Activated CD4-positive, alpha-beta memory T cell treated with anti-CD3 and anti-CD28 coated beads for 36 hours (primary cell): ENCODE measurements at regions of chr20 and their contacts with region 1.

Region 1: DNA sequence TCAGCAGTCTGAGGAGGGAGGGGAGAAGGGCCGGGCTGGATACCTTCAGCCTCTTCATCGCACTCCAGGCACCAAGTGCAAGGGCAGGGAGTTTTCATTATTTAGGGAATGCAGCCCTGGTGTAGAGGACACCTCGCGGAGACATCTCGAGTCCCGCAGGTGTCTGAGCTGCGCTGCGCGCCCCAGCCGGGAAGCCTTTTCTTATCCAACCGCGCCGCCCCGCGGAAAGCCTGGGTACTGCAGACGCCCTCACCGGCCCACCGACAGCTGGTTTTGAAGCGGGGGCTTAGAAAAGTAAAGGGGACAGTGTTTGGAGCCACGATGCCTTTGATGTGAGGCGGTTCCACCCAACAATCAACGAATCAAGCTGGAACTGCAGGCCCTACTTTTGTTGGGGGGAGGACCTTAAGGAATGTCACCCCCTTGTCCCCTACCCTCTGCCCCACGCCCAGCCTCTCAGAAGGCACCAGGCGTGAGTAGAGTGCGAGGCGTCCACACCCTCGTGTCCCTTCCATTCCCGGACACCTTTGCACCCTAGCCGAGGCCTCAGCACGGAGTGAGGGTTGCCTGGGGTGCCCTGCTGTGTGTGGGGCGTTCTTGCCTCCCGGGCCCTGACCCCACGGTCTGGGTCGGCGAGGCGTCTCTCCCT is 8.6 kb downstream of the NKX2-2 start:
- DNase-seq: peak; percentile 85
- H3K4me3 Mint-ChIP-seq: peak overlapping the region; percentile 57
- H3K27ac Mint-ChIP-seq: no peak overlapping the region
- H3K4me1 Mint-ChIP-seq: peaks cover 32% of the 10 kb centered on the region
- H3K27me3 Mint-ChIP-seq: peaks cover 49% of the 10 kb centered on the region

Region 2: GRCh38 chr20:20860078-20860806 is 645.0 kb before region 1 on chr20:
- CTCF ChIA-PET with region 1: interaction called, 40 read pairs
- POLR2A ChIA-PET with region 1: no interaction called
- intact Hi-C with region 1: loop called (anchors 2 kb)
- DNase-seq: peak; percentile 91
- H3K4me3 Mint-ChIP-seq: no peak overlapping the region
- H3K27ac Mint-ChIP-seq: no peak overlapping the region
- H3K4me1 Mint-ChIP-seq: no peaks in the 10 kb centered on the region
- H3K27me3 Mint-ChIP-seq: peaks cover 14% of the 10 kb centered on the region

Region 3: GRCh38 chr20:21099751-21100577 is 405.3 kb before region 1 on chr20:
- CTCF ChIA-PET with region 1: interaction called, 17 read pairs
- POLR2A ChIA-PET with region 1: no interaction called
- intact Hi-C with region 1: no loop called
- DNase-seq: peak; percentile 68
- H3K4me3 Mint-ChIP-seq: peak overlapping the region; percentile 74
- H3K27ac Mint-ChIP-seq: peak overlapping the region; percentile 63
- H3K4me1 Mint-ChIP-seq: peaks cover 30% of the 10 kb centered on the region
- H3K27me3 Mint-ChIP-seq: peaks cover 68% of the 10 kb centered on the region

Region 4: GRCh38 chr20:21395666-21396598 is 109.4 kb before region 1 on chr20:
- CTCF ChIA-PET with region 1: interaction called, 17 read pairs
- POLR2A ChIA-PET with region 1: no interaction called
- intact Hi-C with region 1: loop called (anchors 2 kb)
- DNase-seq: peak; percentile 64
- H3K4me3 Mint-ChIP-seq: peak overlapping the region; percentile 33
- H3K27ac Mint-ChIP-seq: no peak overlapping the region
- H3K4me1 Mint-ChIP-seq: peaks cover 19% of the 10 kb centered on the region
- H3K27me3 Mint-ChIP-seq: peaks cover 72% of the 10 kb centered on the region

Region 5: GRCh38 chr20:21559305-21559704 is 54.0 kb after region 1 on chr20:
- CTCF ChIA-PET with region 1: interaction called, 7 read pairs
- POLR2A ChIA-PET with region 1: no interaction called
- intact Hi-C with region 1: loop called (anchors 5 kb)
- DNase-seq: peak; percentile 77
- H3K4me3 Mint-ChIP-seq: peak overlapping the region; percentile 50
- H3K27ac Mint-ChIP-seq: peak overlapping the region; percentile 75
- H3K4me1 Mint-ChIP-seq: peaks cover 54% of the 10 kb centered on the region
- H3K27me3 Mint-ChIP-seq: peaks cover 4% of the 10 kb centered on the region

Region 6: GRCh38 chr20:21640561-21641182 is 135.4 kb after region 1 on chr20:
- CTCF ChIA-PET with region 1: no interaction called
- POLR2A ChIA-PET with region 1: no interaction called
- intact Hi-C with region 1: no loop called
- DNase-seq: no peak
- H3K4me3 Mint-ChIP-seq: no peak overlapping the region
- H3K27ac Mint-ChIP-seq: no peak overlapping the region
- H3K4me1 Mint-ChIP-seq: no peaks in the 10 kb centered on the region
- H3K27me3 Mint-ChIP-seq: peaks cover 6% of the 10 kb centered on the region

Region 7: DNA sequence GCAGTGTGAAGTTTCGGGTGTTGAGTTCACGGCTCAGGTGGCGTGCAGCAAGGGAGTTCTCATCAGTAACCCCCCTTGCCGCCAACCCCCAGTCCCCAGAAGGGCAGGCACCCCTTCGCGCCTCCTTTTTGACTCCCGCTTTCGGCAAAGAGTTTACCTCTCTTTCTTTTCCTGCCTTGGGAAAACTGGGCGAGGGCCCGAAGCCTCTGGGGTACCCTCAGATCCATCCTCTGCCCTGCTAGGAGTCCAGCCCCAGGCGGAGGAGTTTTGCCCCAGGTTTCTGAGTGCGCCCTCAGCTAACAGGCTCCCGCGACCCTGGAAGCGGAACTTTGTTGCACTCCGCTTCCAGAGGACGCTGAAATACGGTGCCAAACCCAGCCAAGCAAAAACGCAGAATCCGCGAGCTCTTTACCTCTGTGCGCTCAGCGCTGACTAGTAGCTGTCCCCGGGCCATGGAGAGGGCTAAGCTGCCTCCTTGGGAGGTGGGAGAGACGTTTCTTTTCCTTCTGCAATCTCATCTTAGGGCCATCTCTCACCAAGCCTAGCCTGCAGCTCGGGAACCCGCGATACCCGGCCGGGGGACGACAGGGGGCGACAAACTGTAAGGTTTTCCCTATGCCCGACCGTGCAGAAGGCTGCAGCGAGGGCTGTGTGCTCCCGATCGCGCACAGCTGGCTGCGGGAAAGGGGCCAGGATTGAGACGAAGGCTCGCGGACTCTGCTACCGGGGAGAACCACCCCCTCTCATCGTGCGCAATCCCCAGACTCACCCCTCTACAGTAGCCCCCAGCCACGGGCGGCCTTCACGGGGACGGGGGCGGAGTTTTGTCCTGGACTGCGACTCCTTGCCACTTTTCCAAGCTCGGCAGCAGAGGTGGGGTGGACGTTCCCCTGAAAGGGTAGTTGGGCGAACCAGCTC is 197.5 kb after region 1 on chr20:
- CTCF ChIA-PET with region 1: no interaction called
- POLR2A ChIA-PET with region 1: no interaction called
- intact Hi-C with region 1: loop called (anchors 5 kb)
- DNase-seq: peak; percentile 64
- H3K4me3 Mint-ChIP-seq: no peak overlapping the region
- H3K27ac Mint-ChIP-seq: no peak overlapping the region
- H3K4me1 Mint-ChIP-seq: peaks cover 7% of the 10 kb centered on the region
- H3K27me3 Mint-ChIP-seq: peaks cover 77% of the 10 kb centered on the region